Heart left ventricle (tissue), 16 donors: ENCODE measurements at regions of chr4 and their contacts with region 1.

Region 1: DNA sequence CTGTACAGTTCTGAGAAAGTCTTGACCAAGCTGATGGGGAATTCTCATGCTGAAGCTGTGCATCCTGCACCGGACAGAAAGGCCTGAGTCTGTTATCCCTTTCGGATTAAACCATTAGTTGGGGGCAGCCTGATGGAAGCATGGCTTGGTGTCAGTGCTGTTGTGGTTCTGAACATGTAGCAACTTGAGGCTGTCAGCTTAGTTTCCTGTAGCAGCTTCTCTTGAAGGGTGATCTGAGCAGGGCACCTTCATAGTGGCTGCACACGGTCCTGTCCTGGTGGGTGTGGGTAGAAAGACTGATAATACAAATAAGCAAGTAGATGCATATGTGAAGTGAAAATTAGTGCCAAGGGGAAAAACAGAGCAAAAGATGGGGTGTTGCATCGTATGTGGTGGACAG is 11.7 kb downstream of the KIAA0232 start:
- DNase-seq: no peak
- ATAC-seq: no peak
- H3K4me3 ChIP-seq: no peak overlapping the region
- H3K27ac ChIP-seq: no peak overlapping the region
- H3K4me1 ChIP-seq: peaks cover 0 to 84% (median 25%) of the 10 kb centered on the region in 12 donors
- H3K27me3 ChIP-seq: no peaks in the 10 kb centered on the region
- CTCF ChIP-seq: no peak
- POLR2A ChIP-seq: no peak

Region 2: GRCh38 chr4:6200011-6200921 is 593.9 kb before region 1 on chr4 and contains the start of gene JAKMIP1:
- intact Hi-C with region 1: no loop called
- DNase-seq: peak; percentile 55 to 86 (median 71)
- ATAC-seq: peak; percentile 43 to 90 (median 82)
- H3K4me3 ChIP-seq: peak within 1 kb of the TSS; percentile 20 to 66 (median 52)
- H3K27ac ChIP-seq: peak within 1 kb of the TSS in 1 of 12 donors; percentile 62
- H3K4me1 ChIP-seq: peaks cover 0 to 24% (median 7%) of the 10 kb centered on the region in 12 donors
- H3K27me3 ChIP-seq: peaks cover 30 to 56% (median 40%) of the 10 kb centered on the region in 9 donors
- CTCF ChIP-seq: no peak
- POLR2A ChIP-seq: no peak
- total RNA-seq, gene JAKMIP1: 0.23 to 0.99 (median 0.38) TPM in 3 of 9 donors, not detected in the others

Region 3: GRCh38 chr4:6620891-6621555 is 173.2 kb before region 1 on chr4:
- intact Hi-C with region 1: no loop called
- DNase-seq: no peak
- ATAC-seq: peak in 1 of 4 donors; percentile 23
- H3K4me3 ChIP-seq: no peak overlapping the region
- H3K27ac ChIP-seq: no peak overlapping the region
- H3K4me1 ChIP-seq: no peaks in the 10 kb centered on the region
- H3K27me3 ChIP-seq: no peaks in the 10 kb centered on the region
- CTCF ChIP-seq: no peak
- POLR2A ChIP-seq: no peak

Region 4: GRCh38 chr4:6751611-6752498 is 42.3 kb before region 1 on chr4:
- intact Hi-C with region 1: no loop called
- DNase-seq: no peak
- ATAC-seq: no peak
- H3K4me3 ChIP-seq: peak overlapping the region in 1 of 12 donors; percentile 25
- H3K27ac ChIP-seq: peak overlapping the region in 1 of 12 donors; percentile 58
- H3K4me1 ChIP-seq: peaks cover 0 to 41% (median 21%) of the 10 kb centered on the region in 12 donors
- H3K27me3 ChIP-seq: no peaks in the 10 kb centered on the region
- CTCF ChIP-seq: no peak
- POLR2A ChIP-seq: no peak

Region 5: GRCh38 chr4:6840062-6840976 is 46.1 kb after region 1 on chr4:
- intact Hi-C with region 1: loop called in 1 of 10 experiments (anchors 10 kb)
- DNase-seq: peak in 4 of 5 donors; percentile 30 to 45 (median 44)
- ATAC-seq: peak; percentile 80 to 95 (median 89)
- H3K4me3 ChIP-seq: no peak overlapping the region
- H3K27ac ChIP-seq: peak overlapping the region; percentile 21 to 87 (median 70)
- H3K4me1 ChIP-seq: peaks cover 4 to 39% (median 24%) of the 10 kb centered on the region in 12 donors
- H3K27me3 ChIP-seq: no peaks in the 10 kb centered on the region
- CTCF ChIP-seq: no peak
- POLR2A ChIP-seq: no peak